ENCODE measurements at regions of chr6 and their contacts with region 1.

Region 1: DNA sequence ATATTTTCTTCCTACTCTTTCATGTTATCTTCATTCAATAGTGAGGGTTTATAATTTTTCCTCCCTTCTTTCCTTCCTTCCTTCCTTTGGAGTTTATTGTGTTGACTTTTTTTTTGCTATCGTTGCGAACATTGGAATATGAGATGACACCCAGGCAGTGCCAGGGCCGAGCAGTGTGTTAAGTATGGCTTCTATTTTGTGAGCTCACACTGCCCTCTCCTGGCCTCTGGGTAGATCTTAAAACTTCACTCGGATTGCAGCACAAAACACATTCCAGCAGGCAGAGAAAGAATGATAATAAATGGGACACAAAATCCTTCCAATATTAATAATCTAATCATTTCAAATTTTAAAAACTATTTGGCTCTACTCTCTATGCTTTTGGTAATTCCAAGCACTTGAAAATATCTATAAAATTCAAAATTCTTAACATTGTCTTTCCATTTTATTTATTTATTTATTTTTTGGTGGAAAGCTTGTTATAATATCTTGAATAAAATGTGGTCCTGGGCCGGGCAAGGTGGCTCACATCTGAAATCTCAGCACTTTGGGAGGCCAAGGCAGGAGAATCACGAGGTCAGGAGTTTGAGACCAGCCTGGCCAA is 147.4 kb upstream of the OLIG3 start:
- DNase-seq: peak; percentile 57
- CTCF ChIP-seq: peak; percentile 69

Region 2: DNA sequence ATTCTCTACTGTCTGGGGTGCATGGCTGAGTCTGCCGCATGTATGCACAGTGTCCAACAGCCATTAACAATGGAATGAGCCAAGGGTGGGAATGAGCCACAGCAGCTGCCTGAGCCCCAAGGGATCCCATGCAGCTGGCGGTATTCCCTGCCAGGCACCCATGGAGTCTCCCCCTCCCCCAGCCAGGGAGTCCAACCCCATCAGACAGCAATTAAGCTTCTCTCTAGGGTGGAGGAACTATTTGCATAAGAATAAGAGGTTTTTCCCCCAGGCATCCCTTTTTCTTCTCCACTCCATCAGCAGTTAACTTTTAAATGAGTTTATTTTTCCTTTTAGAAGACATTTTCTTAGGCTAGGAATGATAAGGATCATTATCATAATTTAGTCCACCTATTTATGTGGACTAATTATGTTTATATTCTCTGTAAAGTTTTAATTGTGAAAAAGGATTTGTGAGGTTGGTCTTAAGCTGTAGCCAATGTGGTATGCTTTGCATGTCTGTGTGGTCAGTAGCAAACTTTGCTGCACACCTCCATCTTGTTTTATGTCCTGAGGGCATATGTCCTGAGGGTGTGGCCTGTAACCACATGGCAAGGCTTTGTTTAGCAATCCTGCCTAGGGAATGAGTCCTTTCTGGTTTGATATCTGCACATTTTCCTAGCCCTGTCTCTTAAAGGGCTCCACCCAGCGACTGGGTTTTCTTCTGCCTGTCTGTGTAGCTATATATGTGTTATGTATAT is 11.6 kb after region 1 on chr6:
- CTCF ChIA-PET with region 1: interaction called, 10 read pairs
- POLR2A ChIA-PET with region 1: no interaction called
- DNase-seq: no peak
- CTCF ChIP-seq: no peak

Region 3: GRCh38 chr6:137728385-137729349 is 87.1 kb after region 1 on chr6:
- CTCF ChIA-PET with region 1: no interaction called
- POLR2A ChIA-PET with region 1: no interaction called
- DNase-seq: no peak
- CTCF ChIP-seq: no peak